ENCODE measurements at regions of chr9 and their contacts with region 1.

Region 1: GRCh38 chr9:86948074-86948929 is 996 bp upstream of the GAS1 start:
- DNase-seq: peak; percentile 77
- H3K4me3 ChIP-seq: peak overlapping the region; percentile 44 to 93 (median 85)
- H3K27ac ChIP-seq: peak overlapping the region; percentile 45
- H3K4me1 ChIP-seq: peaks cover 9% of the 10 kb centered on the region
- H3K27me3 ChIP-seq: no peaks in the 10 kb centered on the region
- CTCF ChIP-seq: peak; percentile 86 to 95

Region 2: GRCh38 chr9:86486891-86487837 is 461.1 kb before region 1 on chr9:
- CTCF ChIA-PET with region 1: interaction called, 6 read pairs
- dilution Hi-C with region 1: no loop called
- in situ Hi-C with region 1: loop called in 1 of 2 experiments (anchors 10 kb)
- intact Hi-C with region 1: loop called (anchors 1 kb)
- DNase-seq: peak; percentile 40
- H3K4me3 ChIP-seq: no peak overlapping the region
- H3K27ac ChIP-seq: no peak overlapping the region
- H3K4me1 ChIP-seq: peaks cover 8% of the 10 kb centered on the region
- H3K27me3 ChIP-seq: no peaks in the 10 kb centered on the region
- CTCF ChIP-seq: peak; percentile 31 to 69

Region 3: GRCh38 chr9:86637515-86637914 is 310.8 kb before region 1 on chr9:
- CTCF ChIA-PET with region 1: no interaction called
- dilution Hi-C with region 1: no loop called
- in situ Hi-C with region 1: loop called (anchors 25 kb)
- intact Hi-C with region 1: loop called (anchors 1 kb)
- DNase-seq: no peak
- H3K4me3 ChIP-seq: no peak overlapping the region
- H3K27ac ChIP-seq: no peak overlapping the region
- H3K4me1 ChIP-seq: no peaks in the 10 kb centered on the region
- H3K27me3 ChIP-seq: no peaks in the 10 kb centered on the region
- CTCF ChIP-seq: peak; percentile 34 to 83

Region 4: GRCh38 chr9:86983260-86984255 is 35.3 kb after region 1 on chr9:
- CTCF ChIA-PET with region 1: interaction called, 9 read pairs
- dilution Hi-C with region 1: loop called (anchors 5 kb)
- in situ Hi-C with region 1: no loop called
- intact Hi-C with region 1: loop called (anchors 1 kb)
- DNase-seq: peak; percentile 98
- H3K4me3 ChIP-seq: no peak overlapping the region
- H3K27ac ChIP-seq: peak overlapping the region; percentile 95
- H3K4me1 ChIP-seq: peaks cover 47% of the 10 kb centered on the region
- H3K27me3 ChIP-seq: no peaks in the 10 kb centered on the region
- CTCF ChIP-seq: no peak

Region 5: GRCh38 chr9:87014436-87014835 is 66.1 kb after region 1 on chr9:
- CTCF ChIA-PET with region 1: no interaction called
- dilution Hi-C with region 1: no loop called
- in situ Hi-C with region 1: no loop called
- intact Hi-C with region 1: no loop called
- DNase-seq: no peak
- H3K4me3 ChIP-seq: no peak overlapping the region
- H3K27ac ChIP-seq: no peak overlapping the region
- H3K4me1 ChIP-seq: no peaks in the 10 kb centered on the region
- H3K27me3 ChIP-seq: no peaks in the 10 kb centered on the region
- CTCF ChIP-seq: no peak

Region 6: DNA sequence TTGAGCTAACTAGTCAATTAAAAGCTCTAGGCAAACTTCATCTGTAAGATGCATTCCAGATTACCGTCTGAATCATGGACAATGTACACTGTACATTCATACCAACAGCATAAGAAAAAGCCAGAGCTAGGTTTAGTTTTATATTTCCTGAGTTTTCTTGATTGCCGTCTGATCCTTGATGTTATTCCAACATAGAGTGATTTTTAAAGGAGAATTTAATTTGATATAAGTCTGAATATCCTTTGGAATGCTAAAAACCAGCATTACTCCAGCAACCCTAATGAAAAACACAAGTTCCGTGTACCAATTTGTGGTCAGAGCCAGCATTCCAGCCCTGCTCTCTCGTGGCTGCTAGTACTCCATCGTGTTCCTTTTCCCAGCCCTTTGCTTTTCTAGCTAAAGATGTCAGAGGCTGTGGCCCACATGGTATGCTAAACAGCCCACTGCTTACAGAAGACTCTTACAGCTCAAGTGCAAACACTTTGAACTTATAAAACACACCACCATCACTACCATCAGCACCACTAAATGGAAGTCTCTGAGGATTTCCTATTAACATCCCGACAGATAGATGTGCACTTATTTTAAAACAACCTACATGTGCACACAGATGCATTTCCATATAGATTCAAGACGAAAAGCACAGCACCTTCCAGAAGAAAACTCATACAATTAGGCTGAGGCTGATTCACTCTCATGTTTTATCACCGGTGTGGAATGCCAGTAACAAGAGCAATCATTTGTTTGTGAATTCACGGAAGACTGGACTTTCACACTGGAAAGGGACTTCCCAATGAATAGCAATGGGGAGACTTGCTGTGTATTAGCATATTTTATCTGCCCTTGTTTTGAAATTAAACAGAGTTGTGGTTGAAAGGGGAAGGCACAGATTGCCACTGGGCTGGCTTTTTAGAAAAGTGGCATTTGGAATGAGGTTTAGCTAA is 245.9 kb after region 1 on chr9:
- CTCF ChIA-PET with region 1: no interaction called
- dilution Hi-C with region 1: no loop called
- in situ Hi-C with region 1: no loop called
- intact Hi-C with region 1: loop called (anchors 10 kb)
- DNase-seq: peak; percentile 94
- H3K4me3 ChIP-seq: no peak overlapping the region
- H3K27ac ChIP-seq: peak overlapping the region; percentile 80
- H3K4me1 ChIP-seq: peaks cover 42% of the 10 kb centered on the region
- H3K27me3 ChIP-seq: no peaks in the 10 kb centered on the region
- CTCF ChIP-seq: no peak

Region 7: GRCh38 chr9:87324613-87325194 is 376.4 kb after region 1 on chr9:
- CTCF ChIA-PET with region 1: no interaction called
- dilution Hi-C with region 1: no loop called
- in situ Hi-C with region 1: loop called (anchors 10 to 25 kb)
- intact Hi-C with region 1: loop called (anchors 1 kb)
- DNase-seq: peak; percentile 45
- H3K4me3 ChIP-seq: no peak overlapping the region
- H3K27ac ChIP-seq: no peak overlapping the region
- H3K4me1 ChIP-seq: peaks cover 10% of the 10 kb centered on the region
- H3K27me3 ChIP-seq: no peaks in the 10 kb centered on the region
- CTCF ChIP-seq: peak; percentile 54 to 68